ENCODE measurements at regions of chr19 and their contacts with region 1.

Region 1: DNA sequence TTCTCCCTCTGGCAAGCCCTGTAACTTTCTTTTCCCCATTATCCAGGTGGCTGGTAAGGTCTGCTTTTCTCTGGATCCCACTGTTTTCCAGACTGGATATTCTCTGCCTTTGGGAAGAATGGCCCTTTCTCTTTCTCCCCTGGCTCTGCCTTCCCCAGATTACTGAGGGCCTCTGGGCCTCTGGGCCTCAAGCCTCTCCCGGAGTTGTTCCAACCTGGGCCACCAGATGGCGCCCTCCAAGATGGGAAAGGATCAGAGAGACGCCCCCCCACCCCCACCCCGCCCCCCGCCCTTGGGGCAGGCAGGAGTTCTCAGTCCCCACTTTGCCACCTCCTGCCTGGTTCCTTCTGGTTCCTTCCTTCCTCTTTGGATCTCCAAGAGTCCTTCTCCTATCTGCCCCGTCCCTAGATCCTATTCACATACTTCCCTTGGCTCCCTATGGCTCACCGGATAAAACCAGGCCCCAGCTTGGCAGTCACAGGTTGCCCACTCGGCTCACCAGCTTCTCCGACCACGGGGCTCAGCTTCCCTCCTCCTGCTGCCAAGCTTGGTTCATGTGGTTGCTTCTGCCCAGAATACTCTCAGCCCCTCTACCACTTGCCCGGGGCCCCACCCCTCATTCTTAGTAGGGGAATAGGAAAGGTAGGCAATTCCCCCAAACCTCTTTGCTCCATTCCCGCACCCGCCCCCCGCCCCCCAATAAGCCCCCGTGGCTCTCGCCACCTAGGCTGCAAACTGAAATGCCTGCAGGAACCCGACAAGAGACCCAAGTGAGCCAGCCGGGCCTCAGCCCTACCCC is 13.1 kb downstream of the EPS8L1 start:
- DNase-seq: peak; percentile 24
- H3K4me3 ChIP-seq: no peak overlapping the region
- CTCF ChIP-seq: peak; percentile 65

Region 2: DNA sequence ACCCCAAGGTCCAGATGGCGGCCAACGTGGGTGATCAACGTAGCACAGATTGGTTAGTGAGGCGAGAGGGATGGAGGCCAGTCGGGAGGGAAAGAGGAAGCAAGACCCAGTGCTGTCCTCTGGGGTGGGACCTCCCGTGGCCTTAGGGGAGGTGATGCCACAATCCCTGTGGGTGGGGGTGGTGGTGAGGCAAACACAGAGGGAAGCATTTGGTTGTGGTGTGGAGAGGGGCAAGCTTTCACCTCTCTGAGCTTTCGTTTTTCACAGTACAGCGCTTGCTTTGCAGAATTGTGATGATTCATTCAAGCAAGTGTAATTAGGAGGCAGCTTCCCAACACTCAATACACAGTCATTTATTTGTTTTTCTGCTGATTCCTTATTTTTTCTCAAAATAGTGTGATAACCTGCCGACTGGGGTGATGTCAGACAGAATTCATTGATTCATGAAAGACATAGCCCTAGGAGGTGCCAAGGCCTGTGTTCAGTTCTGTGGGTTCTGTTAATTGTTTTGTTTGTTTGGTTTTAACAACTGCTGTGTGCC is 637.3 kb before region 1 on chr19:
- in situ Hi-C with region 1: loop called (anchors 10 kb)
- DNase-seq: no peak
- H3K4me3 ChIP-seq: no peak overlapping the region
- CTCF ChIP-seq: no peak

Region 3: GRCh38 chr19:54937926-54938325 is 150.8 kb before region 1 on chr19:
- in situ Hi-C with region 1: no loop called
- DNase-seq: no peak
- H3K4me3 ChIP-seq: no peak overlapping the region
- CTCF ChIP-seq: no peak

Measured in astrocyte of the cerebellum (primary cell).